ENCODE measurements at regions of chr11 and their contacts with region 1.

Region 1: DNA sequence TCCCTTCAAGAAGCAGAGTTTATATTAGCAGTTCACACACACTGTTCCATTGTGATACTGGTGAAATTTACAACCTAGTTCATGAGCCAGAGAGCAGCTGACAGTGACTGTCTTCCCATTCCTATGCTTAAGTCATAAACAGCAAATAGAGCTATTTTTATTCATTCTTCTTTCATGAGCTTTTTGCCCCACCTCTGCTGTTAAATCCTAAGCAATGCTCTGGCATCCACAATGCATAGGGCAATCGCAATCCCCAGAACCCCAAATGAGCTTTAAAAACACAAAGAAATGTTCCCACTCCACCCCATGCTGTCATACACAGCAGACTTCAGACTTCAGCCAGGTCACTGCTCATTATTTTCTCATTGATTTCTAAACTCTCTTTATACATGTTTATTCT is 307.5 kb downstream of the ETS1 start:
- DNase-seq: no peak
- H3K4me3 ChIP-seq: no peak overlapping the region
- H3K27ac ChIP-seq: no peak overlapping the region
- H3K4me1 ChIP-seq: no peaks in the 10 kb centered on the region
- H3K27me3 ChIP-seq: no peaks in the 10 kb centered on the region
- CTCF ChIP-seq: no peak
- EP300 ChIP-seq: no peak
- POLR2A ChIP-seq: no peak

Region 2: DNA sequence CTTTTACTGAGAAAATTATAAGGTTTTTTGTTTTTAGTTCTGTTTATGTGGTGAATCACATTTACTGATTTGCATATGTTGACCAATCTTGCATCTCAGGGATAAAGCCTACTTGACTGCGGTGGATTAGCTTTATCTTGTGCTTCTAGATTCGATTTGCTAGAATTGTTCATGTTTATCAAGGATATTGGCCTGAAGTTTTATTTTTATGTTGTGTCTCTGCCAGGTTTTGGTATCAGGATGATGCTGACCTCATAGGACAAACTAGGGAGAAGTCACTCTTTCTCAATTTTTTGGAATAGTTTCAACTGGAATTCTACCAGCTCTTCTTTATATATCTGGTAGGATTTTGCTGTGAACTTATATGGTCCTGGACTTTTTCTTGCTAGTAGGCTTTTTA is 197.3 kb before region 1 on chr11:
- intact Hi-C with region 1: no loop called
- DNase-seq: no peak
- H3K4me3 ChIP-seq: no peak overlapping the region
- H3K27ac ChIP-seq: no peak overlapping the region
- H3K4me1 ChIP-seq: no peaks in the 10 kb centered on the region
- H3K27me3 ChIP-seq: no peaks in the 10 kb centered on the region
- CTCF ChIP-seq: no peak
- EP300 ChIP-seq: no peak
- POLR2A ChIP-seq: no peak

Region 3: GRCh38 chr11:128172046-128172878 is 107.6 kb before region 1 on chr11:
- intact Hi-C with region 1: loop called in 1 of 4 experiments (anchors 10 kb)
- DNase-seq: peak; percentile 68 to 87 (median 84)
- H3K4me3 ChIP-seq: no peak overlapping the region
- H3K27ac ChIP-seq: no peak overlapping the region
- H3K4me1 ChIP-seq: no peaks in the 10 kb centered on the region
- H3K27me3 ChIP-seq: no peaks in the 10 kb centered on the region
- CTCF ChIP-seq: peak; percentile 59 to 79 (median 72)
- EP300 ChIP-seq: no peak
- POLR2A ChIP-seq: no peak

Measured in ovary (tissue), 10 donors.